GM12878 (cell line): ENCODE measurements at regions of chr7 and their contacts with region 1.

Region 1: DNA sequence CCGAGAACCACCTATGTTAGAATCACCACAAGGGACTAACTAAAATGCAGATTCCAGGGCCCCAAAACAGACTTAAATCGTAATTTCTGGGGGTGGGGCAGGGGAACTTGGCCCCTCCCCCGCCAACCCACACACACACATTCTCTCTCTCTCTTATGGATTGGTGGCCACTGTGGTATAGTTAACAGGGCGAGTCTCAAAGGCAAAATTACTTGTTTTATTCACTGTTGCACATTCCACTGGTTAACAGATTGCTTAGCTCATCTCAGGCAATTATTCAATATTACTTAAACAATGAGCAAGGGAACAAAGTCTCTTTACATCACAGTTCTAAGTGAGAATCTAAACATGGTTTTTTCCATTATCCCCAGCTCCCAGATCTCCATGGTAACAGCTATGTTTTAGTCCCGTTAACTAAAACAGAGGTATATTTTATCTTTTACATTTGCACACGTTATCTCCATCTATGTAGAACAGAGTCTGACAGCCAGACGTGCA is 38.5 kb downstream of the IGF2BP3 start:
- DNase-seq: no peak
- ATAC-seq: peak; percentile 14; the same call in 2 of the 3 replicates
- H3K4me3 ChIP-seq: no peak overlapping the region
- H3K27ac ChIP-seq: no peak overlapping the region
- H3K4me1 ChIP-seq: peaks cover 7% of the 10 kb centered on the region; the same call in 1 of the 2 replicates
- H3K27me3 ChIP-seq: no peaks in the 10 kb centered on the region
- CTCF ChIP-seq: no peak
- EP300 ChIP-seq: no peak
- POLR2A ChIP-seq: no peak
- RAD21 ChIP-seq: no peak

Region 2: DNA sequence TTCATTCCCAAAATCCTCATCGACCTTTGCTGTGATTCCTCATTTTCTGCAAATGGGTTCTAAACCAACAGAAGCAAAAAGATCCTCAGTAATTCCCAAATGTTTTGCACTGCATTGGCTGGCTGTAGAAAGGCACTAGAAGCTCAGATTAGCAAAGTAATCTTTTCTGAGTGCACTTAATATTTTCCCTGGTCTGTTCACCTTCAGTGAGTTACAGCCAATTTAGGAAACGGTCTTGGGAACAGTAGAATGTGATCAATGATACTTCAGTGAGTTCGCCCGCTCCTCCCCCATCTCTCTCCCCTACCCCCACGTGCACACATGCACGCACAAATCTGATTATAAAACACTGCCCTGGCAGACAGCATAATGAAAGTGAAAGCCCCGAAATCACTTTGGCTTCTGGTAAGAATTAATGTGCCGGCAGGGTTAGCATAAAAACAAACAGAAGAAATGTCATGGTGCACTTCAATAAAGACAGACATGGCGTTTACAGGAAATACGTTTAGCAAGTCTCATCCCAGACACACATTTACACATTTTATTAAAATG is 1284.7 kb before region 1 on chr7:
- CTCF ChIA-PET with region 1: no interaction called
- POLR2A ChIA-PET with region 1: no interaction called
- RAD21 ChIA-PET with region 1: no interaction called
- SMC1A ChIA-PET with region 1: no interaction called
- in situ Hi-C with region 1: no loop called
- intact Hi-C with region 1: no loop called
- DNase-seq: no peak
- ATAC-seq: peak; percentile 59
- H3K4me3 ChIP-seq: peak overlapping the region; percentile 31; the same call in 1 of the 2 replicates
- H3K27ac ChIP-seq: no peak overlapping the region
- H3K4me1 ChIP-seq: no peaks in the 10 kb centered on the region
- H3K27me3 ChIP-seq: no peaks in the 10 kb centered on the region
- CTCF ChIP-seq: no peak
- EP300 ChIP-seq: no peak
- POLR2A ChIP-seq: no peak
- RAD21 ChIP-seq: no peak

Region 3: DNA sequence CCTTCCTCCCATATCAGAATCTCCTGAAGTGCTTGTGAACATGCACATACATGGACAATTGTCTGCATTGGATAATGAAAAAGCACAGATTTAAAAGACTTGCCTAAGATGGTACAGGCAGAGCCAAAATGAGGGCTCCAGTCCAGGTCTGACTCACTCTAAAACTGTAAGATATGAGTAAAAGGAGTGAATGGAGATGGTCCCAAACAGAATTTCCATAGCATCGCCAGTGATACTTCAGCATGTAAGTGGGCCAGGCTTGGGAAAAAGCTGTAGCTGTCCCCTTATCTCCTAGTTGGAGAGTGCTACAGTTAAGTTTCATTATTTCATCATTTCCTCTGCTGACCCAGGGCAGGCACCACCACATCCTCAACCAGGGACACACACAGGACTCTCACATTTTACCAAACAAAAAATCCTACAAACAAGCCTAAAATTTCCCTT is 731.2 kb before region 1 on chr7:
- CTCF ChIA-PET with region 1: no interaction called
- POLR2A ChIA-PET with region 1: no interaction called
- RAD21 ChIA-PET with region 1: no interaction called
- SMC1A ChIA-PET with region 1: no interaction called
- in situ Hi-C with region 1: no loop called
- intact Hi-C with region 1: no loop called
- DNase-seq: no peak
- ATAC-seq: peak; percentile 41
- H3K4me3 ChIP-seq: no peak overlapping the region
- H3K27ac ChIP-seq: no peak overlapping the region
- H3K4me1 ChIP-seq: peaks cover 17% of the 10 kb centered on the region
- H3K27me3 ChIP-seq: no peaks in the 10 kb centered on the region
- CTCF ChIP-seq: no peak
- EP300 ChIP-seq: no peak
- POLR2A ChIP-seq: no peak
- RAD21 ChIP-seq: no peak

Region 4: DNA sequence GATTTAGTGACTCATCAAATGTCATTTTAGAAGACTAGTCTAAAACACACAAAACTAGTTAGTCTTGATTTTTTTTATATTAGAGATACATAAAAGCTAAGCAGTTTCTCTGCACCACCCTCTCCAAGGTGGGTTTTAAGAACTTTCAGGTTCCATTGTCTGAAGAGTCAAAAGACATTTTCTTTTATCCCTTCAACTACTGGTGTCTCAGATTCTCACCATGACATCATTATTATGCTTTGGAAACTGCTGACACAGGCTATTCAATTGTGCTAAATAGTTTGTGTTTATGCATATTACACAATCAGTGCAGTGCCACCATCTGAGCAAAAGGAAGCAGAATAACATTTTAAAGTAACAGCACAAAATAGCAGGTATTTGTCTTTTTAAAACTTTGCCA is 13.7 kb before region 1 on chr7:
- CTCF ChIA-PET with region 1: interaction called, 36 read pairs
- POLR2A ChIA-PET with region 1: no interaction called
- RAD21 ChIA-PET with region 1: interaction called, 17 read pairs
- SMC1A ChIA-PET with region 1: interaction called, 25 read pairs
- in situ Hi-C with region 1: no loop called
- intact Hi-C with region 1: no loop called
- DNase-seq: no peak
- ATAC-seq: peak; percentile 64
- H3K4me3 ChIP-seq: no peak overlapping the region
- H3K27ac ChIP-seq: no peak overlapping the region
- H3K4me1 ChIP-seq: peaks cover 18% of the 10 kb centered on the region
- H3K27me3 ChIP-seq: no peaks in the 10 kb centered on the region
- CTCF ChIP-seq: no peak
- EP300 ChIP-seq: no peak
- POLR2A ChIP-seq: no peak
- RAD21 ChIP-seq: no peak

Region 5: GRCh38 chr7:23462846-23463245 is 31.1 kb after region 1 on chr7:
- CTCF ChIA-PET with region 1: interaction called, 25 read pairs
- POLR2A ChIA-PET with region 1: interaction called, 7 read pairs
- RAD21 ChIA-PET with region 1: interaction called, 3 read pairs
- SMC1A ChIA-PET with region 1: interaction called, 3 read pairs
- in situ Hi-C with region 1: no loop called
- intact Hi-C with region 1: loop called (anchors 2 kb)
- DNase-seq: no peak
- ATAC-seq: peak; percentile 20
- H3K4me3 ChIP-seq: peak overlapping the region; percentile 39
- H3K27ac ChIP-seq: peak overlapping the region; percentile 57
- H3K4me1 ChIP-seq: peaks cover 10% of the 10 kb centered on the region
- H3K27me3 ChIP-seq: no peaks in the 10 kb centered on the region
- CTCF ChIP-seq: peak in 1 of 3 experiments; percentile 62; a peak in 3 of 6 replicates
- EP300 ChIP-seq: no peak
- POLR2A ChIP-seq: no peak
- RAD21 ChIP-seq: peak; percentile 66

Region 6: DNA sequence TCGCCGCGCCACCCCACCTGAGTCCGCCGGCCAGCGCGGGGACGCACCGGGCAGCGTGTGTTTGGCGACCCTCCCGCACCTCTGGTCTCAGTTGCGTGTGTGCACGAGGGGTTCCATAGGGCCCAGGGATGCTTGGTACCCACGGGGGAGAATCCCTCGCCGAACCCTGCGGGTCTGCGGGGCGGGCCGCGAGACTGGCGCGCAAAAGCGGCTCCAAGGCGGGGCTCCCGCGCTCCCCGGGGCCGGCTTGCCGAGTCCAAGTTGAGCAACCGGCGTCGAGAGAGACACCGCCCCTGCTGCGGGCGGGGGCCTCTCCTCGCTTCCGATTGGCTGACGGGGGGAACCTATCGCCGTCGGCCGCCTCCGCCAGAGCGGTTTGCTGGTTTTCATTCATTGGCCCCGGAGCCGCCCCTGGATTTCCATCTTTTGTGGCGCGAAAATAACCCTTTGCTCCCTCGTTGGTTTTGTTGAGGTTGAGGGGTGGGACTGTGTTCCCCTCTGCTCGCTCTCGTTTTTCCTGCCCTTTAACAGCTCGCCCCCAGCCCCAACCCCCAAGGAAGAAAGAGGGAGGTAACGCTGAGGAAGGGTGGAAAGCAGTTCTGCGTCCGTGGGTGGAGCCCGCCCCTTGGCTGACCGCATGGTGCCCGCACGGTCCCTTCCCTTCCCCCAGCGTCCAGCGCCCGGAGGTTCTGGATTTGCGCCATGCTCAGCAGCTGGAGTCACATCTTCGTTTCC is 42.5 kb after region 1 on chr7:
- CTCF ChIA-PET with region 1: interaction called, 9 read pairs
- POLR2A ChIA-PET with region 1: interaction called, 3 read pairs
- RAD21 ChIA-PET with region 1: interaction called, 14 read pairs
- SMC1A ChIA-PET with region 1: interaction called, 13 read pairs
- in situ Hi-C with region 1: no loop called
- intact Hi-C with region 1: no loop called
- DNase-seq: peak; percentile 76
- ATAC-seq: peak; percentile 76
- H3K4me3 ChIP-seq: peak overlapping the region; percentile 89
- H3K27ac ChIP-seq: peak overlapping the region; percentile 94
- H3K4me1 ChIP-seq: no peaks in the 10 kb centered on the region
- H3K27me3 ChIP-seq: peaks cover 0 to 4% of the 10 kb centered on the region in 2 experiments; a peak in 1 of 4 replicates
- CTCF ChIP-seq: no peak
- EP300 ChIP-seq: no peak
- POLR2A ChIP-seq: peak; percentile 93
- RAD21 ChIP-seq: no peak

Region 7: DNA sequence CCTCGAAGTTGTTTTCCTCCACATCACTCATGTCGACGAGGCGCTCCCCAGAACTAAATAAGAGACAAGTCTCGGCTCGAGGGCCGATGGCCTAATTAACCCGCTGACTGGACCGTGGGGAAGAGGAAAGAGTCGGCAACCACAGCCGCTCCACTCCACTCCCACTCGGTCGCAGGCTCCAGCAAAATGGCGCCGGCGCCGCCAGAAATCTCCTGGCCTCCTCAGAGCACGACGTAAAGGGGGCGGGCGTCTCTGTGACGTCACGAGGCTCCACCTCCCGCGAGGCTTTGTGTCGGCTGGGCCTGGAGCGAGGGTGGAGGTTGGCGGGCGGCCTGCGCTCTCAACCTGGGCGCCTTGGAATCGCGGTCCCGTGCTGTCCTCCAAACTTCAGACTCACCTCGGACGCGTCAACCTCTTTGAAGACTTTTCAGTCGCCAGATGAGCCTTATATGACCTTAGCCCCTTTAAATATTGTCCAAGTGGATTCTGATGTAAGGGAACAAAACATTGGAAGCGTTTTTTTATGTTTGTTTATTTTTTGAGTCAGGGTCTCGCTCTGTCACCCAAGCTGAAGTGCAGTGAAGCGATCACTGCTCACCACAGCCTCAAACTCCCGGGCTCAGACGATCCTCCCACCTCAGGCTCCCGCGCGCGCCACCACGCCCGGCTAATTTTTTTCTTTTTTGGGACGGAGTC is 100.2 kb after region 1 on chr7 and contains the start of gene TRA2A:
- CTCF ChIA-PET with region 1: interaction called, 39 read pairs
- POLR2A ChIA-PET with region 1: interaction called, 6 read pairs
- RAD21 ChIA-PET with region 1: interaction called, 3 read pairs
- SMC1A ChIA-PET with region 1: interaction called, 4 read pairs
- in situ Hi-C with region 1: no loop called
- intact Hi-C with region 1: loop called (anchors 2 kb)
- DNase-seq: peak; percentile 86
- ATAC-seq: peak; percentile 84
- H3K4me3 ChIP-seq: peak within 1 kb of the TSS; percentile 99
- H3K27ac ChIP-seq: peak within 1 kb of the TSS; percentile 99
- H3K4me1 ChIP-seq: 0 out of 2 replicates have a peak, but pooled peaks cover 2% of the 10 kb centered on the region
- H3K27me3 ChIP-seq: no peaks in the 10 kb centered on the region
- CTCF ChIP-seq: no peak
- EP300 ChIP-seq: 0 out of 4 replicates have a peak, but pooled peaks of 1 of the 2 experiments have one; percentile 22
- POLR2A ChIP-seq: peak; percentile 98
- RAD21 ChIP-seq: no peak
- polyA plus RNA-seq, gene TRA2A: 69.2 to 83.1 TPM

Region 8: DNA sequence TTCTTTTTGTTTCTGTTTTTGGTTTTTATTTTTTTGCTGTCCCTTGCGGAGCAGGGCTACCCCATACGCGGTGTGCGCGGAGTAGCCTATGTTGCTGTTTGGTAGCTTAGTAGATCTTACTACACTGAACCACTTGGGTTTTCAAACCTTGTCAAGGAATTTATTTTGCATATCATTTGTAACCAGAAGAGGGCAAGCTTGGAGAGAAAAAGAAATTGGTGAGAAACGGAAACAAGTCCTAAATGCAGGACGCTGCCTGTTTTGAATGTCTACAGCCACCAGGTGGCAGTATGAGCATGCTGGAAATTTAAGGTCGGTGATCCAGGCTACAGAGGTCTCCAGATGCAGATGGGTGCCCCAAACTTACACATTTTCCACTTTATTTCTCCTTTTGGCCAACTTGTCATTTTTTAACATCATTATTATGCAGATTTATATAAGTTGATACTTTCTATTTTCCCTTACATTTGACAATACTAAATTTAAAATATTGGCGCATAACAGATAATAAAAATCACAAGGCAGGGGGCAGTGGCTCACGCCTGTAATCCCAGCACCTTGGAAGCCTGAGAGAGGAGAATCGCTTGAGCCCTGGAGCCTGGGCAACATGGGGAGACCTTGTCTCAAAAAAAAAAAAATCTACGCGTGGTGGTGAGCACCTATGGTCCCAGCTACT is 115.3 kb after region 1 on chr7:
- CTCF ChIA-PET with region 1: interaction called, 47 read pairs
- POLR2A ChIA-PET with region 1: interaction called, 8 read pairs
- RAD21 ChIA-PET with region 1: interaction called, 25 read pairs
- SMC1A ChIA-PET with region 1: interaction called, 21 read pairs
- in situ Hi-C with region 1: no loop called
- intact Hi-C with region 1: loop called (anchors 1 kb)
- DNase-seq: peak; percentile 74
- ATAC-seq: peak; percentile 79
- H3K4me3 ChIP-seq: no peak overlapping the region
- H3K27ac ChIP-seq: peak overlapping the region; percentile 18; the same call in 1 of the 2 replicates
- H3K4me1 ChIP-seq: peaks cover 13% of the 10 kb centered on the region
- H3K27me3 ChIP-seq: no peaks in the 10 kb centered on the region
- CTCF ChIP-seq: peak; percentile 83 to 95 (median 93); a peak in 5 of 6 replicates
- EP300 ChIP-seq: no peak
- POLR2A ChIP-seq: no peak
- RAD21 ChIP-seq: peak; percentile 89